Caco-2 (cell line): ENCODE measurements at regions of chr1 and their contacts with region 1.

Region 1: DNA sequence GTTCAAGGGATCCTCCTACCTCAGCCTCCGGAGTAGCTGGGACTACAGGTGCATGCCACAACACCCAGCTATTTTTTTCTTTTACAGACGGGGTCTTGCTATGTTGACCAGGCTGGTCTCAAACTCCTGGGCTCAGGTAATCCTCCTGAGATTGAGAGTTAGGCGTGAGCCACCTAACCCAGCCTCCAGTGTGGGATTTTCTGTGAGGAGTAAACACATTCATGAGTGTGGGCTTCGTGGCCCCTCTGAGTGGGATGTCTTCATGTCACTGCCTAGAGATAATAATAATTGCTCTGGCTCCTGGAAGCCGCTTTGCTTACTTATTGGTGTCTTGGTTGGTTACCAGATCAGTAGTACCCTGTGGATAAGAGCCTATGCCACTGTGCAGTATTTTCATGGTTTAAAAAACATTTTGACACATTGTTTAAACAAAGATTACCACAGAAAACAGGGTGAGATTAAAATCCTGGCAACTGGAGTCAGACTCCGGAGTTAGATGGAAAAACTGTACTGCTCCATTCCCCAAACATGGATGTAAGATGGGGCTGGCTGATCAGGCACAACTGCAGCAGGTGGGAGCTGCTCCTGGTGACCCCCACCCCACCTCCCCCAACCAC is 159.1 kb upstream of the RAB4A start:
- DNase-seq: no peak
- H3K4me3 ChIP-seq: no peak overlapping the region
- H3K4me3 Mint-ChIP-seq: no peak overlapping the region
- H3K27ac Mint-ChIP-seq: no peak overlapping the region
- H3K4me1 ChIP-seq: peaks cover 23% of the 10 kb centered on the region
- H3K4me1 Mint-ChIP-seq: peaks cover 3% of the 10 kb centered on the region
- H3K27me3 ChIP-seq: no peaks in the 10 kb centered on the region
- H3K27me3 Mint-ChIP-seq: no peaks in the 10 kb centered on the region
- CTCF ChIP-seq: no peak

Region 2: DNA sequence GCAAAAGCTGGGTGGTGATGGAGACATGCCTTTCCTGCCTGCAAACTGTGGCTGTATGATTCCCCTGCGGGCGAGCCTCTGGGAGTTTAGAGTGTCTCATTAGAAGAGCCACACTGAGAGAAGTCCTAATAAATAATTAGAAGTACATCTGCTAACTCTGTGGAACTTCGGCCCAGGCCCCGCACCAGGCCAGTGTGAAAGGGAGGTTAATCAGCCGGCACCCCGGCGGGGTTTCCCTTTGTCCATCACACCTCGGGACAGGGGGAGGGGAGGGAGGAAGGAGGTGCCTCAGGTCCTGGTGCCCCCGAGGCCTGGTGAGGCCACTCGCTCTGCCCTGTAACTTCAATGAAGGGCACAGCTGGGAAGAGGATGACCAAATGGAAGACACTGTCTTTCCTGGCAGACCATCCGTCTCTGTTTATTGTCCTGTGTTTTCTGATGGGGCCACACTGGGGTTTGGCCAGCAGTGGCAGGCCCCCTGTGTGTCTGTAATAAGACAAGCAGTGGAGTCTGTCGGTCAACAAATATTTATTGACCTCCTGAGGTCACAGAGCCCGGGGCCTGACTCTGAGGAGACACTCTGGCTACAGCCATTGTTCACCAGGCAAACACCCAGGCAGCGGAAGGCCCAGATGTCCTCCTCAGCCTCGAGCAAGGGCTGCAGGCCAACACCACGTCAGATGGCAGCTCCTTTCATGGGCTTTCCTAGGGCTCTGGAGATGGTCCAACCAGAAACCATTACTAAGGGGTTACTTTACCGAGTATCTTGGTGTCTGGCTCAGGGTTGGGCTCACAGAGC is 108.4 kb before region 1 on chr1:
- CTCF ChIA-PET with region 1: no interaction called
- POLR2A ChIA-PET with region 1: no interaction called
- intact Hi-C with region 1: no loop called
- DNase-seq: no peak
- H3K4me3 ChIP-seq: no peak overlapping the region
- H3K4me3 Mint-ChIP-seq: no peak overlapping the region
- H3K27ac Mint-ChIP-seq: no peak overlapping the region
- H3K4me1 ChIP-seq: no peaks in the 10 kb centered on the region
- H3K4me1 Mint-ChIP-seq: no peaks in the 10 kb centered on the region
- H3K27me3 ChIP-seq: no peaks in the 10 kb centered on the region
- H3K27me3 Mint-ChIP-seq: no peaks in the 10 kb centered on the region
- CTCF ChIP-seq: no peak

Region 3: DNA sequence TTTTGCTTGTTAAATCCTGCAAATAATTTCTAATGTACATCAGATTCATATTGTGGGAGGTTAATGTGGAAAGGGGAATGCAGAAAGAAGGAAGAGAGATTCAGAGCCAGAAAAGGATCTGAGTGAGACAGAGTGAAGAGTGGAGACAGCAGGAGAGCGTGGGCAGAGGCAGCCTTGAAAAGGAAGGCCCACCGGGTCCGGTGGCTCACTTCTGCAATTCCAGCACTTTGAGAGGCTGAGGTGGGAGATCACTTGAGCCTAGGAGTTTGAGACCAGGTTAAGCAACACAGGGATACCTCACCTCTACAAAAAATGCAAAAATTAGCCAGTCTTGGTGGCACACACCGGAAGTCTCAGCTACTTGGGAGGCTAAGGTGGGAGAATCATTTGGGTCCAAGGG is 62.9 kb before region 1 on chr1:
- CTCF ChIA-PET with region 1: no interaction called
- POLR2A ChIA-PET with region 1: no interaction called
- intact Hi-C with region 1: no loop called
- DNase-seq: no peak
- H3K4me3 ChIP-seq: no peak overlapping the region
- H3K4me3 Mint-ChIP-seq: no peak overlapping the region
- H3K27ac Mint-ChIP-seq: no peak overlapping the region
- H3K4me1 ChIP-seq: no peaks in the 10 kb centered on the region
- H3K4me1 Mint-ChIP-seq: no peaks in the 10 kb centered on the region
- H3K27me3 ChIP-seq: no peaks in the 10 kb centered on the region
- H3K27me3 Mint-ChIP-seq: no peaks in the 10 kb centered on the region
- CTCF ChIP-seq: no peak

Region 4: GRCh38 chr1:229059671-229060539 is 51.9 kb before region 1 on chr1:
- CTCF ChIA-PET with region 1: no interaction called
- POLR2A ChIA-PET with region 1: no interaction called
- intact Hi-C with region 1: loop called (anchors 2 kb)
- DNase-seq: no peak
- H3K4me3 ChIP-seq: no peak overlapping the region
- H3K4me3 Mint-ChIP-seq: no peak overlapping the region
- H3K27ac Mint-ChIP-seq: no peak overlapping the region
- H3K4me1 ChIP-seq: no peaks in the 10 kb centered on the region
- H3K4me1 Mint-ChIP-seq: peaks cover 19% of the 10 kb centered on the region
- H3K27me3 ChIP-seq: no peaks in the 10 kb centered on the region
- H3K27me3 Mint-ChIP-seq: no peaks in the 10 kb centered on the region
- CTCF ChIP-seq: no peak